ENCODE measurements at regions of chr17 and their contacts with region 1.

Region 1: DNA sequence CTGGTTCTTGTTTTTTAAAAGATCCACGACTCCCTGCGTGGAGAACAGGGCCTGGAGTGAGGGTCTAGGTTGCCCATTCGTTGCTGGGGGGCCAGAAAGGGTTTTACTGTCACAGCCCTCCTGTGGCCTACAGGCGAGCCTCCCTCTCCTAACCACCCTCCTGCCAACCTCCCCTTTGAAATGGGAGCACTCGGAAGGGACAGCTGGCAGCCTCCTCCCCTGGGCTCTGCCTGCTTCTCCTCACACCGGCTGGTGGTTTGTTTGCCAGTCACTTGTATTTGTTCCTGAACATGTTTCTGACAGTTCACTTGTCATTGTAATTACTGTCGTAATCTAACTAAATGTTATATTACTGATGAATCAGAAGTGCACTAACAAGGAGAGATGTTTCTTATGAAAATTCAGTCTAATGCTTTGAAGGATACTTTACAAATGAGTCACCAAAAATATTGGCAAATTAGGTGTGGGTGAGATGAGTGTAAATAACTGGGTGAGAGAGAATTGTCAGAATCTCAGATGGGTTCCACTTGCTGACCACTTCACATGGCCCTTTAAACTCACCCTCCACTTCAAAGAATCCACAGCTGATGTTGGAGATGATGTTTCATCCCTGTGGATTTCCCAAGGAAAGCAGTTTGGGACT is 2.7 kb upstream of the SPPL2C start:
- DNase-seq: peak; percentile 14
- H3K4me3 ChIP-seq: no peak overlapping the region
- H3K27ac ChIP-seq: no peak overlapping the region
- H3K4me1 ChIP-seq: no peaks in the 10 kb centered on the region
- H3K27me3 ChIP-seq: no peaks in the 10 kb centered on the region
- CTCF ChIP-seq: no peak

Region 2: GRCh38 chr17:45740553-45741330 is 101.3 kb before region 1 on chr17:
- CTCF ChIA-PET with region 1: no interaction called
- dilution Hi-C with region 1: no loop called
- in situ Hi-C with region 1: loop called in 1 of 2 experiments (anchors 25 kb)
- intact Hi-C with region 1: no loop called
- DNase-seq: peak; percentile 33
- H3K4me3 ChIP-seq: no peak overlapping the region
- H3K27ac ChIP-seq: no peak overlapping the region
- H3K4me1 ChIP-seq: no peaks in the 10 kb centered on the region
- H3K27me3 ChIP-seq: peaks cover 2% of the 10 kb centered on the region
- CTCF ChIP-seq: no peak

Region 3: GRCh38 chr17:45794840-45795239 is 47.2 kb before region 1 on chr17:
- CTCF ChIA-PET with region 1: no interaction called
- dilution Hi-C with region 1: no loop called
- in situ Hi-C with region 1: no loop called
- intact Hi-C with region 1: no loop called
- DNase-seq: no peak
- H3K4me3 ChIP-seq: no peak overlapping the region
- H3K27ac ChIP-seq: no peak overlapping the region
- H3K4me1 ChIP-seq: no peaks in the 10 kb centered on the region
- H3K27me3 ChIP-seq: peaks cover 4% of the 10 kb centered on the region
- CTCF ChIP-seq: peak; percentile 3 to 41

Region 4: DNA sequence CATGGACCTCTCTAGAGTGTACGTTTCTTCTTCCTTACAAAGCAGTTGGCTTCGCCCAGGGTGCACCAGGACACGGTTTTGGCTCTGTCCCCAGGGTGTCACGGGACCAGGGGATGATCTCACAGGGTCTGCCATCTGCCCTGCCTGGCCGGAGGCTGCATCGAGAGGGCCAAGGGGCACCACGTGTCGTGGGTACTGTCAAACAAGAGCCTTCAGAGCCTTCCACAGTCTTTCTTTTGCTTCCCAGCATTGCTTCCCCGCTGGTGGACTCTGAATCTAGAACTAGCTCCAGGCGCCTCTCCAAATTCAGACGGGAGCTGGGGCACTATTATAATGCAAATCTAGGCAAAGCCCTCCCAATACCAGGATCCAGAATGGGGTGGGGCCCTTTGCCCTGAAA is 100.3 kb after region 1 on chr17:
- CTCF ChIA-PET with region 1: no interaction called
- dilution Hi-C with region 1: no loop called
- in situ Hi-C with region 1: no loop called
- intact Hi-C with region 1: no loop called
- DNase-seq: no peak
- H3K4me3 ChIP-seq: no peak overlapping the region
- H3K27ac ChIP-seq: no peak overlapping the region
- H3K4me1 ChIP-seq: no peaks in the 10 kb centered on the region
- H3K27me3 ChIP-seq: peaks cover 3% of the 10 kb centered on the region
- CTCF ChIP-seq: no peak

Measured in mammary epithelial cell (primary cell).